Sciatic nerve (tissue), 2 donors: ENCODE measurements at regions of chr3 and their contacts with region 1.

Region 1: DNA sequence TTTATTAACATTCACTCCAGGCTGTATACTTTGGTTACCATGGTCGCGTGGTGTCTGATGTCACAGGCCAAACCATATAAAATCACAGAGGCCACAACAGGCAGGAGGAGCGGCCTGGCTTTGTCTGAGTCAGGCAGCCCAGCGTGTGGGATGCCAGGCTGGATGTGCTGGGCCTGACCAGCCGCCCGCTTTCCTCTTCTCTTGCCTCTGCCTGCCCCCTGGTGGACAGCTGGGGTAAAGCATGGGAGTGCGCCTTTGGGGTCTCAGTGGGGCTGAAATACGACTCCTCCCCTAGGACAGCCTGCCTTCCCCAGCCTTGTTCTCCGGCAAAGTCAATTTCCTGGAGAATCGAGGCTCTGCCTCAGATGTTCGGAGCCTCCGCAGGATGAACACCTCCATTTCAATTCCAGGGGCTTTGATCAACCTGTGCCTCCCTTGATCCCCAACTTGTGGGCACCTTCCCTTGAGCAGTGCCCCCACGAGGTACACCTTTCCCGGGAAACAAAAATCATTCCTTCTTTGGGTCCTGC is 78.2 kb downstream of the CCNL1 start:
- DNase-seq: peak; percentile 95
- ATAC-seq: peak; percentile 88

Region 2: DNA sequence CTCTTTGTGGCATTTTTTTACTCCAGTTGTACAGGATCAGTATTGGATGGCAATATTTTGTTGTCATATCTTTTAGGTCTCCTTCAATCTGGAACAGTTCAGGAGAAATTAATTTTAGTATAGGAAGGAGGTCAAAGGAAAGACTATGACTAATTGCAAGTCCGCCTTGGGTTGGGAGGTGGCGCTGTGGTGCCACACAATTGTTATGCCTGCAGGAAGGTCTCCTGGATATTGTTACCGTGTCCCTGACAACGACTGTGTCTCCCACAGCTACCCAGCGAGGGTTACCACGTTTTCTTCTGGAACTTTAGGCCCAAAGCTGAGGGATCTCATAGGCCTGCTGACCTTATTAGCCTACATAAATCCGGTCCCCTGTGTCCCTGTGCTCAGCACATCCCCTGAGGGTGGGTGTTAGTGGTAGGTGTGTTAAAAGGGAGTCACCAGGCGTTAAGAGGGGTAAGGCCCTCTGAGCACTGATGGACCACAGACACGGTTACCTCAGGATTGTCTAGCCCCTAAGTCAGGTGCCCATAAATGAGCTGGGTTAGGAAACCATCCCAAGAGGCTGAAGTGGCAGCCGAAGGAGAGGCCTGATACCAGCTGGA is 929.8 kb before region 1 on chr3:
- intact Hi-C with region 1: loop called (anchors 10 kb)
- DNase-seq: peak; percentile 77
- ATAC-seq: no peak

Region 3: DNA sequence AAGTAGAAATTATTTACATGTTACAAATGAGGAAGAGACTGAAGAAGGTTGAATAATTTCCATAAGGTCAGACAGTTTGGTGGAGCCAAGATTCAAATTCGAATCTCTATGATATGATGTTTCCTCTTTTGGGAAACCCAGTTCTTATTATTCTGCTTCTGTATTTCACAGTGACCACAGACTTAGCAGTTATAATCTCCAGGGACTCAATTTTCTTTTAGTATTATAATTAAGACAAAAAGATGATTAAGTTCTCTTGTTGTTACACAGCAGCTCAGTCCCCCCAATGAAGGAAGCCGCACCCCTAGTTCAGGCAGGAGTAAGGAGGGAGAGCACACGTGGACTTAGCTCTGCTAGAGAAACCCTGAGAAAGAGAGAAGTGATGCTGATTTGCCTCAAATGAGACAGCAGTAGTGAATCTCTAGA is 52.4 kb before region 1 on chr3:
- intact Hi-C with region 1: loop called (anchors 2 kb)
- DNase-seq: no peak
- ATAC-seq: no peak

Region 4: GRCh38 chr3:157130467-157131251 is 48.9 kb after region 1 on chr3:
- intact Hi-C with region 1: loop called (anchors 10 kb)
- DNase-seq: peak; percentile 77
- ATAC-seq: peak; percentile 55